Aorta (tissue), 5 donors: ENCODE measurements at regions of chr19 and their contacts with region 1.

Region 1: GRCh38 chr19:8005534-8006256 is at the start of gene ELAVL1:
- DNase-seq: peak; percentile 93 to 96
- ATAC-seq: peak; percentile 98
- H3K4me3 ChIP-seq: peak within 1 kb of the TSS; percentile 98 to 99
- H3K27ac ChIP-seq: peak within 1 kb of the TSS; percentile 18 to 52
- H3K4me1 ChIP-seq: peaks cover 0 to 8% of the 10 kb centered on the region in 2 donors
- H3K27me3 ChIP-seq: no peaks in the 10 kb centered on the region
- total RNA-seq, gene ELAVL1: 48.5 to 48.9 TPM

Region 2: DNA sequence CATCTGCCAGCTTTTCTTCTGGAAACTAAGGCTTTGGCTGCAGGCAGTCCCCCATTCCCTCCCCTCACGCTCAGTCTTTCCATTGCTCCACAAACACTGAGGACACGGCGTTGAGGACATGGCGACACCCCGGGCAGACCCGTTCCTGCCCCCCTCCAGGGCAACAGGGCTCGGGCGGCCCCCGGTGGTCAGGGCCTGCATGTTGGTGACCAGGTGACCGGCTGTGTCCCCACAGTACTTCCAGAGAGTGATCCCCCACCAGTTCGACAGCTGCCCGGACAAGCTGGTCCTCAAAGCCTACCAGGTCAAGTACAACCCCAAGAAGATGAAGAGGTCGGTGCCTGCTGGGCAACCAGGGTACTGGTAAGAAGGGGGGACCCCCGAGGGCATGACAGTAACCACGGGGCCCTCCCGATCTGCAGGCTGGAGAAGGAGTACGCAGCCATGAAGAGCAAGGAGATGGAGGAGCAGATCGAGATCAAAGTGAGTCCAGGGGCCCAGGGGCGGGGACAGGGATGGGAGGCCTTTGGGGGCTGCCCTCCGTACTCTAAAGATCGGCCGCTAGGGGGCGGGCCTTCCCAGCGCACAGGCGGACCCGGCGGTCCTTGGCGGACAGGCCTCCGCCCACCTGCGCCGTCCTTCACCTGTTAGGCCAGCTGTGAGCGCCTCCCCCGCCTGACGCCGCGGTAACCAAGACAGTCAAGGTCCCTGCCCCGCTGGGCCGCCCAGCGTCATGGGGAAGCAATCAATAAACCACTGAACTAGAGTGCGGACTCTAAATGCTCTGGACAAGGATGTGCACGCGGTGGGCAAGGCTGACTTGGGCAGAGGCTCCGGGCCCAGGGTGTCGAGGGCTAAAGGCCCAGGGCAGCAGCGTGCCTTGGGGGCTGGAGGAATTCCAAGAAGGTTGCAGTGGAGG is 152.6 kb before region 1 on chr19:
- intact Hi-C with region 1: loop called (anchors 10 kb)
- DNase-seq: peak in 1 of 2 donors; percentile 88
- ATAC-seq: peak; percentile 67
- H3K4me3 ChIP-seq: no peak overlapping the region
- H3K27ac ChIP-seq: no peak overlapping the region
- H3K4me1 ChIP-seq: no peaks in the 10 kb centered on the region
- H3K27me3 ChIP-seq: no peaks in the 10 kb centered on the region

Region 3: GRCh38 chr19:7970716-7971448 is 34.8 kb before region 1 on chr19:
- intact Hi-C with region 1: no loop called
- DNase-seq: no peak
- ATAC-seq: no peak
- H3K4me3 ChIP-seq: no peak overlapping the region
- H3K27ac ChIP-seq: no peak overlapping the region
- H3K4me1 ChIP-seq: no peaks in the 10 kb centered on the region
- H3K27me3 ChIP-seq: no peaks in the 10 kb centered on the region

Region 4: GRCh38 chr19:8028951-8029491 is 23.3 kb after region 1 on chr19:
- intact Hi-C with region 1: no loop called
- DNase-seq: no peak
- ATAC-seq: no peak
- H3K4me3 ChIP-seq: no peak overlapping the region
- H3K27ac ChIP-seq: no peak overlapping the region
- H3K4me1 ChIP-seq: no peaks in the 10 kb centered on the region
- H3K27me3 ChIP-seq: no peaks in the 10 kb centered on the region

Region 5: DNA sequence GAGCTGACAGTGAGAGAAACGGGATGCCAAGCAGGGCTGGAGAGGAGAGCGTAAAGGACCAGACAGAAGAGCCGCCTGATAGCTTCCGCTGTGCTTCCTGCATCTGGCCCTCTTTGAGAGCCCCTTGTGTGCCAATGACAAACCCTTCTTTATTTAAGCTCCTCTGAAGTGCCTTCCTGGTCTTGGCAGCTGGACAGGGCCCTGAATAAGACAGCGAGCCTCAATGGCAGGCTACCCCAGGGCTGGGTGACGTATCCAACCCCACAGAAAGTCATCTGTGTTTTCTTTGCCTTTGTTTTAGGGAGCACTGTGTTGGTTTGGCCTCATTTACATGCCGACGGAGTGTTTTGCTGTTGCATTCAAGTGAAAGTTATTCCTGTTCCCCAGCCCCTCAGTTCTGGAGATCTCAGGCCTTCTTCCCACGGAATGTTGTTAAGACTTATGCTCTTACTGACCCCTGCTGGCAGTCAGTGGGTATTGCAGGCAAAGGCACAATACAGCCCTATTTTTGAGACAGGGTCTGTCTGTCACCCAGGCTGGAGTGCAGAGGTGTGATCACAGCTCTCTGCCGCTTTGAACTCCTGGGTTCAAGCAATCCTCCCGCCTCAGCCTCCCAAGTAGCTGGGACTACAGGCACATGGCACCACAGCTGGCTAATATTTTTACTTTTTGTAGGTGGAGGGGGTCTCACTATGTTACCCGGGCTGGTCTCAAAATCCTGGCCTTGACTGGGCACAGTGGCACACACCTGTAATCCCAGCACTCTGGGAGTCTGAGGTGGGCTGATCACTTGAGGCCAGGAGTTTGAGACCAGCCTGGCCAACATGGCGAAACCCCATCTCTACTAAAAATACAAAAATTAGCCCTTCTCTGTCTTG is 63.6 kb after region 1 on chr19:
- intact Hi-C with region 1: no loop called
- DNase-seq: no peak
- ATAC-seq: no peak
- H3K4me3 ChIP-seq: no peak overlapping the region
- H3K27ac ChIP-seq: no peak overlapping the region
- H3K4me1 ChIP-seq: no peaks in the 10 kb centered on the region
- H3K27me3 ChIP-seq: no peaks in the 10 kb centered on the region